ENCODE measurements at regions of chr2 and their contacts with region 1.

Region 1: GRCh38 chr2:75466708-75467311 is 93.9 kb downstream of the EVA1A start:
- DNase-seq: no peak
- ATAC-seq: peak; percentile 69
- H3K4me3 ChIP-seq: no peak overlapping the region
- H3K27ac ChIP-seq: no peak overlapping the region
- H3K4me1 ChIP-seq: no peaks in the 10 kb centered on the region
- H3K27me3 ChIP-seq: no peaks in the 10 kb centered on the region
- CTCF ChIP-seq: peak; percentile 64 to 68 (median 66)
- EP300 ChIP-seq: no peak
- POLR2A ChIP-seq: no peak
- RAD21 ChIP-seq: peak; percentile 81

Region 2: GRCh38 chr2:75053484-75054112 is 413.2 kb before region 1 on chr2:
- CTCF ChIA-PET with region 1: interaction called, 60 read pairs
- POLR2A ChIA-PET with region 1: no interaction called
- RAD21 ChIA-PET with region 1: interaction called, 9 read pairs
- SMC1A ChIA-PET with region 1: interaction called, 49 read pairs
- in situ Hi-C with region 1: no loop called
- intact Hi-C with region 1: loop called (anchors 2 kb)
- DNase-seq: peak; percentile 69
- ATAC-seq: peak; percentile 78
- H3K4me3 ChIP-seq: no peak overlapping the region
- H3K27ac ChIP-seq: no peak overlapping the region
- H3K4me1 ChIP-seq: peaks cover 22% of the 10 kb centered on the region
- H3K27me3 ChIP-seq: no peaks in the 10 kb centered on the region
- CTCF ChIP-seq: peak; percentile 80 to 92 (median 88); a peak in 5 of 6 replicates
- EP300 ChIP-seq: no peak
- POLR2A ChIP-seq: no peak
- RAD21 ChIP-seq: peak; percentile 92

Region 3: DNA sequence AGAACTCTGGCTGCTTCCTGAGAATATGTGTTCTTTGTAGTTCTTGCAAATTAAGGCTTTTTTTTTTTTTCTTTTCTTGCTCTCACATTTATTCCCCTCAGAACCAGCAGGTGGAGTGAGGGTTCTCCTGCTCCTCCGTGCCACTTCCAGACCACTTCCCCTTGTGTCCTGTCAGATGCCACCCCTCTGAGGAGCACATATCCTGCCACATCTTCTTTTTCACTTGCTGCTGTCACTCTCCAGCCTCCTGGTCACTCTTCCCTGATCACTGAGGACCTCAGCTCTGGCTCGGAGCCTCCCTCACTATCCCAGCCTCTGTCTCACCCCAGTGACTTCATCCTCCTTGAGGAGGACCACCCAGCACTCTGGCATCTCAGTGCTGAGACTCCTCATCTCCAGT is 368.0 kb before region 1 on chr2:
- CTCF ChIA-PET with region 1: interaction called, 13 read pairs
- POLR2A ChIA-PET with region 1: no interaction called
- RAD21 ChIA-PET with region 1: no interaction called
- SMC1A ChIA-PET with region 1: interaction called, 14 read pairs
- in situ Hi-C with region 1: no loop called
- intact Hi-C with region 1: no loop called
- DNase-seq: no peak
- ATAC-seq: peak; percentile 87
- H3K4me3 ChIP-seq: no peak overlapping the region
- H3K27ac ChIP-seq: no peak overlapping the region
- H3K4me1 ChIP-seq: no peaks in the 10 kb centered on the region
- H3K27me3 ChIP-seq: no peaks in the 10 kb centered on the region
- CTCF ChIP-seq: peak; percentile 47 to 50 (median 48); a peak in 5 of 6 replicates
- EP300 ChIP-seq: no peak
- POLR2A ChIP-seq: no peak
- RAD21 ChIP-seq: peak; percentile 53

Region 4: GRCh38 chr2:75194184-75194868 is 272.5 kb before region 1 on chr2:
- CTCF ChIA-PET with region 1: interaction called, 58 read pairs
- POLR2A ChIA-PET with region 1: no interaction called
- RAD21 ChIA-PET with region 1: interaction called, 9 read pairs
- SMC1A ChIA-PET with region 1: interaction called, 31 read pairs
- in situ Hi-C with region 1: no loop called
- intact Hi-C with region 1: loop called (anchors 1 kb)
- DNase-seq: no peak
- ATAC-seq: peak; percentile 46
- H3K4me3 ChIP-seq: no peak overlapping the region
- H3K27ac ChIP-seq: no peak overlapping the region
- H3K4me1 ChIP-seq: no peaks in the 10 kb centered on the region; the same call in 1 of the 2 replicates
- H3K27me3 ChIP-seq: peaks cover 2 to 6% of the 10 kb centered on the region in 2 experiments; a peak in 3 of 4 replicates
- CTCF ChIP-seq: no peak
- EP300 ChIP-seq: no peak
- POLR2A ChIP-seq: no peak
- RAD21 ChIP-seq: no peak

Region 5: GRCh38 chr2:75403991-75404428 is 62.8 kb before region 1 on chr2:
- CTCF ChIA-PET with region 1: interaction called, 127 read pairs
- POLR2A ChIA-PET with region 1: no interaction called
- RAD21 ChIA-PET with region 1: interaction called, 34 read pairs
- SMC1A ChIA-PET with region 1: interaction called, 105 read pairs
- in situ Hi-C with region 1: no loop called
- intact Hi-C with region 1: loop called (anchors 1 kb)
- DNase-seq: peak; percentile 36
- ATAC-seq: peak; percentile 93
- H3K4me3 ChIP-seq: no peak overlapping the region
- H3K27ac ChIP-seq: no peak overlapping the region
- H3K4me1 ChIP-seq: no peaks in the 10 kb centered on the region; the same call in 1 of the 2 replicates
- H3K27me3 ChIP-seq: no peaks in the 10 kb centered on the region
- CTCF ChIP-seq: peak; percentile 73 to 85 (median 80)
- EP300 ChIP-seq: no peak
- POLR2A ChIP-seq: no peak
- RAD21 ChIP-seq: peak; percentile 90

Region 6: DNA sequence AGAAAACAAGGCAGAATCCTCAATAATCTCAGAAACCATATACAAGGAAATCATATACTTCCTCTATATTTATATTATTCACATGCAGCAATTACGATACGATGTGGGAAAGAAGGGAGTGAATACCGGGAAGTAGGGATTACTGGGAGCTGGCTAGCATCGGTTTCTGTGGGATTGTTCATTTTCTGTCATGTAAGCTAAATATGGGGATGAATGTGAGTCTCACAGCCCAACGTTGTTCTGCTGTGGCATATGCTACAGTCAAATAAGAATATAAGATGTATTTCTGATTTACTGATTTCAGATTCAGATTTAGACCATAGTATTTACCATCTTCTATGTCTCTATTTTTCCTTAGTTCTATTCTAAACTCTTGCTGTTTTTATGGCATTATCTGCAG is 19.6 kb before region 1 on chr2:
- CTCF ChIA-PET with region 1: interaction called, 84 read pairs
- POLR2A ChIA-PET with region 1: no interaction called
- RAD21 ChIA-PET with region 1: interaction called, 8 read pairs
- SMC1A ChIA-PET with region 1: interaction called, 18 read pairs
- in situ Hi-C with region 1: no loop called
- intact Hi-C with region 1: no loop called
- DNase-seq: no peak
- ATAC-seq: no peak
- H3K4me3 ChIP-seq: no peak overlapping the region
- H3K27ac ChIP-seq: no peak overlapping the region
- H3K4me1 ChIP-seq: no peaks in the 10 kb centered on the region
- H3K27me3 ChIP-seq: no peaks in the 10 kb centered on the region
- CTCF ChIP-seq: no peak
- EP300 ChIP-seq: no peak
- POLR2A ChIP-seq: no peak
- RAD21 ChIP-seq: no peak

Region 7: DNA sequence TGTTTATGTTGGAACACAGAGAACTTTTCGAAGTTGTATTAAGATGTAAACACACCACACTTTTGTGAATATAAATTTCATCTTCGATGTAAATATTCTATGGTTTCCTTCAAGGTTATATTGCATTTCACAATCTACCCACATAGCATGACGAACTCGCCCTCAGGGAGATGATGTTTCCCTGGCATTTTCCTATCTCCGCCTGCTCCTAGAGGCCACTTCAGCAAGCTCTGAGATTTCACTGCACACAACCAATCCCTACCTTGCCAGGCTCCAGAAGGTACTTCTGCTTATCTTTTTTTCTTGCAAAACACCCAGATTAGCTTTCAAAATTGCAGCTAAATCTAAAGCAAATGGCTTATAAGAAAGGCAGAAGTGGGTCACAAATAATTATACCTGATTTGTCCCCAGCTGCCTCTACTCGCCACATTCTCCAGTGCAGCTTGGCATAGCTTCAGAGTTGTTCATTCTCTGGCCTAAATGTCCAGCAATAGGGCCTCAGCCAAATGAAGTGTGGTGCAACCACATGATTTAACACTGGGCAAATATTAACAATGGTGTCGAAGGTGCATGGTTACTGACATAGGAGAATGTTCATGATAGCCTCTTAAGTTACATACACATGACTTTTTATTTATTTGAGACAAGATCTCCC is 147.4 kb after region 1 on chr2:
- CTCF ChIA-PET with region 1: interaction called, 76 read pairs
- POLR2A ChIA-PET with region 1: no interaction called
- RAD21 ChIA-PET with region 1: interaction called, 25 read pairs
- SMC1A ChIA-PET with region 1: interaction called, 18 read pairs
- in situ Hi-C with region 1: loop called (anchors 5 kb)
- intact Hi-C with region 1: loop called (anchors 1 kb)
- DNase-seq: no peak
- ATAC-seq: no peak
- H3K4me3 ChIP-seq: no peak overlapping the region
- H3K27ac ChIP-seq: no peak overlapping the region
- H3K4me1 ChIP-seq: no peaks in the 10 kb centered on the region
- H3K27me3 ChIP-seq: no peaks in the 10 kb centered on the region; a peak in 1 of 4 replicates
- CTCF ChIP-seq: no peak
- EP300 ChIP-seq: no peak
- POLR2A ChIP-seq: no peak
- RAD21 ChIP-seq: no peak

Measured in GM12878 (cell line).